Caco-2 (cell line): ENCODE measurements at regions of chr11 and their contacts with region 1.

Region 1: DNA sequence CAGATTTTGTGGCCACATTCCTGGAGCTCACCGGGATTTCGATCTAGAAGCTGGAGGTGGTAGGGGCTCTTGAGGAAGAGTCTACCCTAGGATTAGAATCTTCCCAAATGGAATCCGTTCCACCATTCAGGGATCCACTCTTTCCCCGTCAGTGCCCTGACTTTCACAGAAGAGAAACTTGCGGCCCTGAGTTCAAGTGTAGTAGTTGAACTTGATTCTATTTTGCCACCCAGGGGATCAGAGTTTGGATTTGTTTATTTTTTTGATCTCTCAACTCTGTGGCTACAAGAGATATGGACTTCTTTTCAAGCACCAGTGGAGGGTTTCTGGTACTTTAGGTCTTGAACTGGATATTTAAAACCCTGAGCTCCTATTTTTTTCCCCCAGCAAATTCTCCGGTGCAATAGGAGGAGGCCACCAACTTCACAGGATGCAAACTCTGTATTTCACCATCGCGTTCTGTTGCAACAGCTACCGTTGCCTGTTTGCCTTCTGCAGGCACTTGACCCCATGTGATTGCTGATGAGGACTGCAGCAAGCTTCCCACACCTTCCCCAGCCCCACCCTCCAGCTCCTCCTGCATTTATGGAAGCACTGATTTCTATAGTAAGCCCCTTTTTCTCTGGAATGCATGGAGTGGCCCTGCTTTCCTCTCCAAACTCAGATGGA is 14.8 kb upstream of the MRGPRF start:
- DNase-seq: peak; percentile 66
- H3K4me3 ChIP-seq: no peak overlapping the region
- H3K4me3 Mint-ChIP-seq: no peak overlapping the region
- H3K27ac Mint-ChIP-seq: no peak overlapping the region
- H3K4me1 ChIP-seq: peaks cover 8% of the 10 kb centered on the region
- H3K4me1 Mint-ChIP-seq: no peaks in the 10 kb centered on the region
- H3K27me3 ChIP-seq: no peaks in the 10 kb centered on the region
- H3K27me3 Mint-ChIP-seq: no peaks in the 10 kb centered on the region
- CTCF ChIP-seq: no peak

Region 2: GRCh38 chr11:68889948-68890446 is 137.8 kb before region 1 on chr11:
- CTCF ChIA-PET with region 1: no interaction called
- POLR2A ChIA-PET with region 1: interaction called, 10 read pairs
- intact Hi-C with region 1: no loop called
- DNase-seq: peak in 1 of 2 experiments; percentile 59
- H3K4me3 ChIP-seq: no peak overlapping the region
- H3K4me3 Mint-ChIP-seq: no peak overlapping the region
- H3K27ac Mint-ChIP-seq: no peak overlapping the region
- H3K4me1 ChIP-seq: no peaks in the 10 kb centered on the region
- H3K4me1 Mint-ChIP-seq: no peaks in the 10 kb centered on the region
- H3K27me3 ChIP-seq: no peaks in the 10 kb centered on the region
- H3K27me3 Mint-ChIP-seq: no peaks in the 10 kb centered on the region
- CTCF ChIP-seq: peak; percentile 25 to 49

Region 3: GRCh38 chr11:68974421-68975194 is 53.2 kb before region 1 on chr11:
- CTCF ChIA-PET with region 1: no interaction called
- POLR2A ChIA-PET with region 1: no interaction called
- intact Hi-C with region 1: loop called (anchors 2 kb)
- DNase-seq: peak; percentile 66 to 73
- H3K4me3 ChIP-seq: no peak overlapping the region
- H3K4me3 Mint-ChIP-seq: no peak overlapping the region
- H3K27ac Mint-ChIP-seq: peak overlapping the region; percentile 75
- H3K4me1 ChIP-seq: peaks cover 12% of the 10 kb centered on the region
- H3K4me1 Mint-ChIP-seq: peaks cover 23% of the 10 kb centered on the region
- H3K27me3 ChIP-seq: no peaks in the 10 kb centered on the region
- H3K27me3 Mint-ChIP-seq: no peaks in the 10 kb centered on the region
- CTCF ChIP-seq: no peak